ENCODE measurements at regions of chr3 and their contacts with region 1.

Region 1: GRCh38 chr3:180679178-180680096 is at the start of gene CCDC39:
- DNase-seq: peak; percentile 26
- H3K4me3 Mint-ChIP-seq: peak within 1 kb of the TSS; percentile 83
- H3K27ac Mint-ChIP-seq: peak within 1 kb of the TSS; percentile 64
- H3K4me1 Mint-ChIP-seq: peaks cover 22% of the 10 kb centered on the region
- H3K27me3 Mint-ChIP-seq: peaks cover 41% of the 10 kb centered on the region
- total RNA-seq, gene CCDC39: not detected in 2 replicates

Region 2: DNA sequence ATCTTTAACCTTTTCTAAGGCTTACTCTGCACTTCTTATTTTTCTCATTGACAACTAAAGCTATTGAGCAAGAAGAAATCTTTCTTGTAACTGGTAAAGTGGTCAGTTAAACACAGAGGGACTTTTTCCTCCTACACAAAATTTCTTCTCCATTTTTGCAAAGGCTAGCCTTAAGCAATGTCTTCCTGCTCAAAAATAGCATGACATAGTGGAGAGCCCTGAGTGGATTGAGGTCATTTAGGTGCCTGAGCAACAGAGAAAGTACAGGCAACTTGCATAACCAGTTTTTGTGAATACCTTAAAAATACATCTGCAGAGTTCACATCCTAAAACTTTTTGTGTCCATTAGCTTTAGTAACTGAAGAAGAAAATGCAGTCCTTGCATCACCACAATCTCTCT is 222.2 kb before region 1 on chr3:
- intact Hi-C with region 1: no loop called
- DNase-seq: no peak
- H3K4me3 Mint-ChIP-seq: no peak overlapping the region
- H3K27ac Mint-ChIP-seq: no peak overlapping the region
- H3K4me1 Mint-ChIP-seq: no peaks in the 10 kb centered on the region
- H3K27me3 Mint-ChIP-seq: no peaks in the 10 kb centered on the region

Region 3: GRCh38 chr3:180624714-180625113 is 54.7 kb before region 1 on chr3:
- intact Hi-C with region 1: loop called (anchors 2 kb)
- DNase-seq: no peak
- H3K4me3 Mint-ChIP-seq: peak overlapping the region; percentile 36
- H3K27ac Mint-ChIP-seq: peak overlapping the region; percentile 86
- H3K4me1 Mint-ChIP-seq: peaks cover 36% of the 10 kb centered on the region
- H3K27me3 Mint-ChIP-seq: no peaks in the 10 kb centered on the region

Region 4: GRCh38 chr3:180657094-180657493 is 22.3 kb before region 1 on chr3:
- intact Hi-C with region 1: no loop called
- DNase-seq: no peak
- H3K4me3 Mint-ChIP-seq: no peak overlapping the region
- H3K27ac Mint-ChIP-seq: no peak overlapping the region
- H3K4me1 Mint-ChIP-seq: no peaks in the 10 kb centered on the region
- H3K27me3 Mint-ChIP-seq: peaks cover 4% of the 10 kb centered on the region

Region 5: GRCh38 chr3:181086011-181086410 is 406.6 kb after region 1 on chr3:
- intact Hi-C with region 1: no loop called
- DNase-seq: no peak
- H3K4me3 Mint-ChIP-seq: no peak overlapping the region
- H3K27ac Mint-ChIP-seq: no peak overlapping the region
- H3K4me1 Mint-ChIP-seq: no peaks in the 10 kb centered on the region
- H3K27me3 Mint-ChIP-seq: no peaks in the 10 kb centered on the region